H1 (cell line): ENCODE measurements at regions of chr11 and their contacts with region 1.

Region 1: GRCh38 chr11:34174412-34175041 is 69.1 kb downstream of the NAT10 start:
- DNase-seq: peak; percentile 50 to 92
- H3K4me3 ChIP-seq: peak overlapping the region in 3 of 4 experiments; percentile 36 to 54 (median 42); a peak in 6 of 8 replicates
- H3K27ac ChIP-seq: no peak overlapping the region
- H3K4me1 ChIP-seq: peaks cover 0 to 4% (median 0%) of the 10 kb centered on the region in 4 experiments; a peak in 4 of 7 replicates
- H3K27me3 ChIP-seq: no peaks in the 10 kb centered on the region
- CTCF ChIP-seq: peak; percentile 92 to 97 (median 94)
- EP300 ChIP-seq: peak in 1 of 2 experiments; percentile 27; a peak in 1 of 3 replicates
- POLR2A ChIP-seq: no peak
- RAD21 ChIP-seq: peak; percentile 98 to 99

Region 2: GRCh38 chr11:34021977-34022735 is 152.4 kb before region 1 on chr11:
- CTCF ChIA-PET with region 1: no interaction called
- POLR2A ChIA-PET with region 1: no interaction called
- DNase-seq: no peak
- H3K4me3 ChIP-seq: no peak overlapping the region
- H3K27ac ChIP-seq: no peak overlapping the region
- H3K4me1 ChIP-seq: no peaks in the 10 kb centered on the region; a peak in 1 of 7 replicates
- H3K27me3 ChIP-seq: no peaks in the 10 kb centered on the region
- CTCF ChIP-seq: no peak
- EP300 ChIP-seq: no peak
- POLR2A ChIP-seq: no peak
- RAD21 ChIP-seq: no peak

Region 3: GRCh38 chr11:34185926-34186841 is 11.7 kb after region 1 on chr11:
- CTCF ChIA-PET with region 1: interaction called, 92 read pairs
- POLR2A ChIA-PET with region 1: interaction called, 4 read pairs
- DNase-seq: peak in 1 of 2 experiments; percentile 64
- H3K4me3 ChIP-seq: peak overlapping the region in 2 of 4 experiments; percentile 7 to 13; a peak in 3 of 8 replicates
- H3K27ac ChIP-seq: peak overlapping the region; percentile 20; the same call in 1 of the 2 replicates
- H3K4me1 ChIP-seq: peaks cover 17 to 32% (median 21%) of the 10 kb centered on the region in 4 experiments
- H3K27me3 ChIP-seq: no peaks in the 10 kb centered on the region
- CTCF ChIP-seq: no peak
- EP300 ChIP-seq: no peak
- POLR2A ChIP-seq: no peak
- RAD21 ChIP-seq: no peak

Region 4: DNA sequence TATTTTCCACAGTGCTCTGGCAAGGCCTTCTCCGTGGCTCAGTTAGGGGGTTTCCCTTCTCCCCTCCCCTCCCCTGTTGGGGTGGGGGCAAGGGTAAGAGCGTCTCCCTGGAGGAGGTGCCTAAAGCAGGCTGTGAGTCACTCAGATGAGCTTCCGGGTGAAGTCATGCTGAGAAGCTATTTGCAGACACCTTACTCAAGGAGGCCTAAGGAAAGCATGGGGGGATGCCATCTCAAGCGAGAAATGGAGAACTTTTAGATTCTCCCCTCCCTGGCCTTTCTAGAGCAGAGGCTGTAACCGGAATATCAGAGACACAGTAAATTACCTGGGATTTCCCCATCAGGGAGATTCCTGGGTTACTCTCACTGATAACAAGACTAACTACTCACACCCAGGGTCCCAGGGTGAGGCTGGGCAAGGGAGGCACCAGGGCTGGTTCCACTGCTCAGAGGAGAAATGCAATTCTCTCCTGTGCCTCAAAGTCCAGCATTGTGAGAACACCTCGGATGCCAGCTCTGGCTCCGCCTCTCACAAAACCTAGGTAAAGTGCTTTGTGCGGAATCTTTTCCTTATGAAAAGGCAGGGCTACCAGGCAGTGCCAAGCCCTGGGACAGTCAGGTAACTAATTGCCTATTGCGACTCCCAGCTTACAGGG is 59.7 kb after region 1 on chr11:
- CTCF ChIA-PET with region 1: interaction called, 13 read pairs
- POLR2A ChIA-PET with region 1: no interaction called
- DNase-seq: peak; percentile 67 to 69
- H3K4me3 ChIP-seq: peak overlapping the region in 2 of 4 experiments; percentile 10 to 36; a peak in 3 of 8 replicates
- H3K27ac ChIP-seq: peak overlapping the region; percentile 71; the same call in 1 of the 2 replicates
- H3K4me1 ChIP-seq: peaks cover 3 to 27% (median 11%) of the 10 kb centered on the region in 4 experiments
- H3K27me3 ChIP-seq: no peaks in the 10 kb centered on the region
- CTCF ChIP-seq: no peak
- EP300 ChIP-seq: peak in 1 of 2 experiments; percentile 8; a peak in 1 of 3 replicates
- POLR2A ChIP-seq: 0 out of 3 replicates have a peak, but pooled peaks of 1 of the 2 experiments have one; percentile 33
- RAD21 ChIP-seq: no peak

Region 5: GRCh38 chr11:34250732-34251639 is 76.5 kb after region 1 on chr11:
- CTCF ChIA-PET with region 1: interaction called, 17 read pairs
- POLR2A ChIA-PET with region 1: no interaction called
- DNase-seq: no peak
- H3K4me3 ChIP-seq: no peak overlapping the region
- H3K27ac ChIP-seq: no peak overlapping the region
- H3K4me1 ChIP-seq: peaks cover 0 to 6% (median under 1%) of the 10 kb centered on the region in 4 experiments; a peak in 4 of 7 replicates
- H3K27me3 ChIP-seq: no peaks in the 10 kb centered on the region
- CTCF ChIP-seq: no peak
- EP300 ChIP-seq: no peak
- POLR2A ChIP-seq: no peak
- RAD21 ChIP-seq: no peak

Region 6: DNA sequence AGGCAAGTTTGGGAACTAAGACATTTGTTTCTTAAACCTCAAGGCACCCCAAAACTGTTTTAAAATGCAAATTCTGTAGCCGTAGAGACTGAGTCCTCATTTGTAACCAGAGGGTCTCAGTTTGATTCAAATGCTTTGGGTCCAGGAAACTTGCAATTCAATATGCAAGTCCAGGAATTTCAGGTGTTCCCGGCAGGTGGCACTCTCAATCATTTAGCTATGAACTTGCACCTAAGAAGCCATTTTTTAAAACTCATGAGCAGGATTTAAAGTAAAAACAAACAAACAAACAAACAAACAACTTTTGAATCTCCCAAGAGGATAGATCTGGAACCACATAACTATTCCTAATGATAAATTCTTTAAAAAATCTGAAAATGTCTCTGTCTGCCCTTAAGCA is 192.0 kb after region 1 on chr11:
- CTCF ChIA-PET with region 1: interaction called, 17 read pairs
- POLR2A ChIA-PET with region 1: interaction called, 3 read pairs
- DNase-seq: no peak
- H3K4me3 ChIP-seq: no peak overlapping the region
- H3K27ac ChIP-seq: no peak overlapping the region
- H3K4me1 ChIP-seq: no peaks in the 10 kb centered on the region
- H3K27me3 ChIP-seq: no peaks in the 10 kb centered on the region
- CTCF ChIP-seq: peak in 2 of 3 experiments; percentile 11 to 23; a peak in 2 of 4 replicates
- EP300 ChIP-seq: no peak
- POLR2A ChIP-seq: no peak
- RAD21 ChIP-seq: peak; percentile 7 to 32; a peak in 2 of 4 replicates